Activated CD4-positive, alpha-beta T cell treated with anti-CD3 and anti-CD28 coated beads for 36 hours (primary cell): ENCODE measurements at regions of chr6 and their contacts with region 1.

Region 1: GRCh38 chr6:70667711-70668498 is at the start of gene SMAP1:
- DNase-seq: peak; percentile 97
- ATAC-seq: peak; percentile 93
- H3K4me3 Mint-ChIP-seq: peak within 1 kb of the TSS; percentile 95
- H3K27ac Mint-ChIP-seq: peak within 1 kb of the TSS; percentile 94
- H3K4me1 Mint-ChIP-seq: peaks cover 54% of the 10 kb centered on the region
- H3K27me3 Mint-ChIP-seq: no peaks in the 10 kb centered on the region
- total RNA-seq, gene SMAP1: 24.8 to 31.5 TPM

Region 2: GRCh38 chr6:69796642-69797390 is 871.1 kb before region 1 on chr6 and contains the start of gene LMBRD1:
- CTCF ChIA-PET with region 1: no interaction called
- POLR2A ChIA-PET with region 1: no interaction called
- intact Hi-C with region 1: loop called in 1 of 2 experiments (anchors 10 kb)
- DNase-seq: peak; percentile 99
- ATAC-seq: peak; percentile 94
- H3K4me3 Mint-ChIP-seq: peak within 1 kb of the TSS; percentile 94
- H3K27ac Mint-ChIP-seq: peak within 1 kb of the TSS; percentile 96
- H3K4me1 Mint-ChIP-seq: peaks cover 44% of the 10 kb centered on the region
- H3K27me3 Mint-ChIP-seq: no peaks in the 10 kb centered on the region
- total RNA-seq, gene LMBRD1: 16.7 to 18.4 TPM

Region 3: GRCh38 chr6:70371454-70372105 is 296.3 kb before region 1 on chr6:
- CTCF ChIA-PET with region 1: no interaction called
- POLR2A ChIA-PET with region 1: no interaction called
- intact Hi-C with region 1: no loop called
- DNase-seq: no peak
- ATAC-seq: peak; percentile 30
- H3K4me3 Mint-ChIP-seq: no peak overlapping the region
- H3K27ac Mint-ChIP-seq: no peak overlapping the region
- H3K4me1 Mint-ChIP-seq: no peaks in the 10 kb centered on the region
- H3K27me3 Mint-ChIP-seq: peaks cover 18% of the 10 kb centered on the region

Region 4: GRCh38 chr6:70566751-70567382 is 101.0 kb before region 1 on chr6 and contains the start of gene SDHAF4:
- CTCF ChIA-PET with region 1: interaction called, 5 read pairs
- POLR2A ChIA-PET with region 1: no interaction called
- intact Hi-C with region 1: loop called (anchors 1 to 2 kb)
- DNase-seq: peak; percentile 96
- ATAC-seq: peak; percentile 100
- H3K4me3 Mint-ChIP-seq: peak within 1 kb of the TSS; percentile 78
- H3K27ac Mint-ChIP-seq: peak within 1 kb of the TSS; percentile 82
- H3K4me1 Mint-ChIP-seq: peaks cover 16% of the 10 kb centered on the region
- H3K27me3 Mint-ChIP-seq: no peaks in the 10 kb centered on the region
- total RNA-seq, gene SDHAF4: 15.8 to 17.6 TPM

Region 5: DNA sequence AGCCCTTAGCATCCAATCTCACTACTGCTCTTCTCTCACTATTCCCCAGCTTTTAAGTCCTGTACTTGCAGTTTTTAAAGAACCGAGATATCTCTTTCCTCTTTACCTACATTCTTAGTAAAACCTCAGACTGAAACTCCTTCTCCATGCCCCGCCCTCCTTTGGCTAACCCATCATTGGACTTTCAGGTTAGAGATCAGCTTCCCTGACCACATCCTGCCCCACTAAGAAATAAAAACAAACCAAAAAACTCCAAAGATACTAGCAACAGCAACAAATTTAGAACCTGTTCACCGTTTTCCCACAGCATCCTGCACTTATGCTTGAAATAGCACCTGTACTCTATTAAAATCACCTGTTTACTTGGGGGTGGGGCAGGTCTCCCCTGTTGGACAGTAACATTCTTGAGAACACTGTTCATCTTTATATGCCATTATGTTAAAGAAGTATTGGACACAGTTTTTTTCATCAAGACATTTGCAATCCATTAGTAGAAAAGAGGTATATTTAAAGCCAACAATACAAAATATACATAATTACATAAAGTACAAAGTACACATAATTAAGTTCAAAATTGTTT is 16.5 kb before region 1 on chr6:
- CTCF ChIA-PET with region 1: interaction called, 3 read pairs
- POLR2A ChIA-PET with region 1: no interaction called
- intact Hi-C with region 1: loop called in 1 of 2 experiments (anchors 1 kb)
- DNase-seq: peak; percentile 74
- ATAC-seq: peak; percentile 90
- H3K4me3 Mint-ChIP-seq: no peak overlapping the region
- H3K27ac Mint-ChIP-seq: peak overlapping the region; percentile 65
- H3K4me1 Mint-ChIP-seq: peaks cover 22% of the 10 kb centered on the region
- H3K27me3 Mint-ChIP-seq: no peaks in the 10 kb centered on the region

Region 6: GRCh38 chr6:71288228-71289001 is 620.5 kb after region 1 on chr6 and contains the start of gene OGFRL1:
- CTCF ChIA-PET with region 1: no interaction called
- POLR2A ChIA-PET with region 1: no interaction called
- intact Hi-C with region 1: loop called in 1 of 2 experiments (anchors 1 kb)
- DNase-seq: peak; percentile 82
- ATAC-seq: peak; percentile 91
- H3K4me3 Mint-ChIP-seq: peak within 1 kb of the TSS; percentile 73
- H3K27ac Mint-ChIP-seq: peak within 1 kb of the TSS; percentile 52
- H3K4me1 Mint-ChIP-seq: peaks cover 28% of the 10 kb centered on the region
- H3K27me3 Mint-ChIP-seq: no peaks in the 10 kb centered on the region
- total RNA-seq, gene OGFRL1: 4.0 to 4.3 TPM